CD8-positive, alpha-beta T cell (primary cell): ENCODE measurements at regions of chr12 and their contacts with region 1.

Region 1: DNA sequence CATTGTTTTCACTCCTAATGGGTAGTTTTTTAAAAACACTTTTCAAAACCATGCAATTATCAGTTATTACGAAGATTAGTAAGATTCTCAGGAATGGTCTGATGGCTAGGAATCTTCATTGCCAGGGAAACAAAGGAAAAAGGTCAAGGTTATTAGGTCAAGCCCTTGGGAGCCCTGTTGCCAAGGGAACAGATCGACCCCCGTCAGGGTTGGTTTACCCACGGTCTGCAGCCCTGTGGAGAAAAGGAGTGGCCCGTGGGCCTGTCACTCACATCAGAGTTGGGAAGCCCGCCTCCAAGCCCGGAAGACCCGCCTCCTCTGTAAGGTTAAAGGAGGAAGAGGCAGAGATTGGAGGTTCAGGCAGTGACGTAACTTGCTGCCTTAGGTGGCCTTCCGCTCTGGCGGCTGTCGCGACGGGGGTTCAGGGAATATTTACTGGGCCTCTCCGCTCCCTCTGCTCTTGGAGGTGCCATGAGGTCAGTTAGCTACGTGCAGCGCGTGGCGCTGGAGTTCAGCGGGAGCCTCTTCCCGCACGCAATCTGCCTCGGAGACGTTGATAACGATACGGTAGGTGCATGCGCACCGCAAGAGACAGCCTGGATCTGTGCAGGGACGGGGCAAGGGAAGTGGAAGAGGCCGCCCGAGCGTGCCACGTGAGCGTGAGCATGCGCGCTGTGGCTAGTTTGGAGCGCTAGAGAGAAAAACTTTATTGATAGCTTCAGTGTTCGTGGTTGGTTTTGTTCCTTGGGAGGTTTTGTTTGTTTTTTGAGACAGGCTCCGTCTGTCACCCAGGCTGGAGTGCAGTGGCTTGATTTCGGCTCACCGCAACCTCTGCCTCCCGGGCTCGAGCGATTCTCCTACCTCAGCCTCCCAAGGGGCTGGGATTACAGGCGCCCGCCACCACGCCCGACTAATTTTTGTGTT is at the start of gene ITFG2:
- DNase-seq: peak; percentile 90 to 99 (median 95)
- ATAC-seq: peak; percentile 92
- H3K4me3 ChIP-seq: peak within 1 kb of the TSS; percentile 66 to 80
- H3K4me3 Mint-ChIP-seq: peak within 1 kb of the TSS; percentile 100
- H3K27ac ChIP-seq: peak within 1 kb of the TSS; percentile 83 to 89
- H3K27ac Mint-ChIP-seq: peak within 1 kb of the TSS; percentile 100
- H3K4me1 ChIP-seq: peaks cover 31% of the 10 kb centered on the region
- H3K4me1 Mint-ChIP-seq: peaks cover 38% of the 10 kb centered on the region
- H3K27me3 ChIP-seq: no peaks in the 10 kb centered on the region
- H3K27me3 Mint-ChIP-seq: no peaks in the 10 kb centered on the region
- CTCF ChIP-seq: no peak
- total RNA-seq, gene ITFG2: 72.8 to 73.5 TPM

Region 2: GRCh38 chr12:2682296-2683251 is 130.0 kb before region 1 on chr12:
- CTCF ChIA-PET with region 1: interaction called, 18 read pairs
- POLR2A ChIA-PET with region 1: no interaction called
- intact Hi-C with region 1: loop called (anchors 1 to 2 kb)
- DNase-seq: peak in 6 of 9 experiments; percentile 33 to 72 (median 50)
- ATAC-seq: peak; percentile 79
- H3K4me3 ChIP-seq: no peak overlapping the region
- H3K4me3 Mint-ChIP-seq: no peak overlapping the region
- H3K27ac ChIP-seq: no peak overlapping the region
- H3K27ac Mint-ChIP-seq: peak overlapping the region; percentile 66
- H3K4me1 ChIP-seq: no peaks in the 10 kb centered on the region
- H3K4me1 Mint-ChIP-seq: peaks cover 7% of the 10 kb centered on the region
- H3K27me3 ChIP-seq: no peaks in the 10 kb centered on the region
- H3K27me3 Mint-ChIP-seq: no peaks in the 10 kb centered on the region
- CTCF ChIP-seq: peak; percentile 77

Region 3: DNA sequence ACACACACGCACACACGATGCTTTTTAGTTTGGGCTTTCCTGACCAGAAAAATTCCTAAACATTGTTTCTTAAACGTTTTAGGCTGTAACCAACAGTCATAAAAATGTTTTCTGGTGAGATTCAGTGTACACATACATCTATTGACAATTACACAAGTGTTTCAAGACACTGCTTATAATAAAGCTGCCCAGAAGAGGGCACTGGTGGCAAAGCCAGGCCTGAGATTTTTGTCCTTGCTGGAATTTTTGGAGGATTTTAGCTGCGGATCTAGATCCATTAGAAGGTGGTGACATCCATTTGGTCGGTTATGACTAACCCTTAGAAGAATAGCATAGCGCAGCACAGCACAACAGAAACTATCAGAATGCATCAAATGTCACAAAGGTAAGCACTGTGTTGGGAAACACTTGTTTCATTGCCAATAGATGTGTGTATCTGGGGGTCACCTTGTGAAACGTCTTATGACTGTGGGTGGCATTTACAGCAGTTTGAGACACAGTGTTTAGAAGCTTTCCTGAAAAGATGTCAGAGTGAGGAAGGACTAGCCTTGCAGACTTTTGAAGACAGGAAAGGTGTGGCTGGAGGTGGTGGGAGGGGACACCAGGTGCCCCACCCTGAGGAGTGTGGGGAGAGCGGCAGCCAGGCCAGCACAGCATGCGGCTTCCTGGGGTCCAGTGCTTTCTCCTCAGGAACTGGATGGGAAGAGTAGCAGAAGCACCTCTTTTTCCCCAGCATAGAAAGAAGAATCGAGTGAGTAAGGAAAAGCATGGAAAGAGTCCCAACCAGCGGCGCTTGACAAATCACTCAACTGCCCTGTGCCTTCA is 72.5 kb before region 1 on chr12:
- CTCF ChIA-PET with region 1: no interaction called
- POLR2A ChIA-PET with region 1: no interaction called
- intact Hi-C with region 1: no loop called
- DNase-seq: no peak
- ATAC-seq: no peak
- H3K4me3 ChIP-seq: no peak overlapping the region
- H3K4me3 Mint-ChIP-seq: no peak overlapping the region
- H3K27ac ChIP-seq: no peak overlapping the region
- H3K27ac Mint-ChIP-seq: no peak overlapping the region
- H3K4me1 ChIP-seq: no peaks in the 10 kb centered on the region
- H3K4me1 Mint-ChIP-seq: no peaks in the 10 kb centered on the region
- H3K27me3 ChIP-seq: no peaks in the 10 kb centered on the region
- H3K27me3 Mint-ChIP-seq: peaks cover 3% of the 10 kb centered on the region
- CTCF ChIP-seq: no peak

Region 4: DNA sequence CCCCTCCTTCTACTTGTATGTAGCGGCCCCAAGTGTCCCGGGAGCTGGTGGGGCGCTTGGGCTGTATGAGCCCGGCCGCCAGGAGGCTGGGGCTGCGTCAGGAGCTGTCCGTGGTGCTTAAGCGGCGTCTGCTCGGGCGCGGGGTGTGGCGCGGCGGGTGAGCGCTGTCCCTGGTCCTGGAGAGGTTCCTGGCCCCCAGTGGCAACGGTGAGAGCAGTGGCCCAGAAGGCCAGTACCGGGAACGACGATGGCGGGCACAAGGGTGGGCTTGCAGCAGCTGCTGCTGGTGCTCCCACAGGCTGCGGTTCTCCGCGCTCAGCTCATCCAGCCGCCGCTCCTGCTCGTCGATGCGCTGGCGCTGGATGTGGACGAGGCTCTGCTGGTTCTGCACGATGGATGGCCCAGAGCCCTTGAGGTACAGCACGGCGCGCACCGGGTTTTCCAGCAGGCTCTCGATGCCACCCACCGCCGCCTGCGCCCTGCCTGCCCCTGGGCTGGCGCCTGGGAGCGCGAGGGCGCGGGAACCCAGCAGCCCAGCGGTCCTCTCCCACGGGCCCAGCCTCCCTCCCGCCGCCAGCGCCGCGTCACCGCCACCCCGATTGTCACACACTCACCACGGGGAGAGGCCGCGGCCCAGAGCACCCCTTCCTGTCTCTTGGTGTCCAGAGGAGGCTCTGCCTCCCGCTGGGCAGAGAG is 59.7 kb before region 1 on chr12:
- CTCF ChIA-PET with region 1: no interaction called
- POLR2A ChIA-PET with region 1: no interaction called
- intact Hi-C with region 1: loop called in 1 of 2 experiments (anchors 2 kb)
- DNase-seq: peak; percentile 63 to 87 (median 80)
- ATAC-seq: peak; percentile 100
- H3K4me3 ChIP-seq: no peak overlapping the region
- H3K4me3 Mint-ChIP-seq: no peak overlapping the region
- H3K27ac ChIP-seq: no peak overlapping the region
- H3K27ac Mint-ChIP-seq: no peak overlapping the region
- H3K4me1 ChIP-seq: peaks cover 3% of the 10 kb centered on the region
- H3K4me1 Mint-ChIP-seq: no peaks in the 10 kb centered on the region
- H3K27me3 ChIP-seq: peaks cover 0 to 5% of the 10 kb centered on the region in 2 experiments
- H3K27me3 Mint-ChIP-seq: peaks cover 34% of the 10 kb centered on the region
- CTCF ChIP-seq: no peak

Region 5: DNA sequence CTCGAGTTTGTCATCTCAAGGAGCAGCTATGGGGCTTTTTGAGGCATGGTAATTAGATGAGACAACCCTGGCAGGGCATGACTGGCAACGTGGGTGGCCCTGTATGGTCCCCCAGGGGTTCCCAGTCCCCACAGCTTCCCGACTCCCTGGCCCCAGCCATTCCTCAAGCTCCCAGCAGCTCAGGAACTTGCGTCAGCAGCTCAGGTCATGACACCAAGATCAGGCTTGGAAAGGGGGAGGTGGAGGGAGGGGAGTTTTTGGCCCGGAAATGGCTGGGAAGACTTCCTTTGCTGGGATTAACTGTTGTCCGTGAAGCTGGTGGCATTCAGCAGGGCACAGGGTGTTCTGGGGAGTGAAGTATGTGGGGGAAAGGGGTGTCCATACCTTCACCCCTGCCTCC is 32.7 kb after region 1 on chr12:
- CTCF ChIA-PET with region 1: no interaction called
- POLR2A ChIA-PET with region 1: no interaction called
- intact Hi-C with region 1: no loop called
- DNase-seq: no peak
- ATAC-seq: no peak
- H3K4me3 ChIP-seq: no peak overlapping the region
- H3K4me3 Mint-ChIP-seq: no peak overlapping the region
- H3K27ac ChIP-seq: no peak overlapping the region
- H3K27ac Mint-ChIP-seq: no peak overlapping the region
- H3K4me1 ChIP-seq: no peaks in the 10 kb centered on the region
- H3K4me1 Mint-ChIP-seq: peaks cover 4% of the 10 kb centered on the region
- H3K27me3 ChIP-seq: no peaks in the 10 kb centered on the region
- H3K27me3 Mint-ChIP-seq: no peaks in the 10 kb centered on the region
- CTCF ChIP-seq: no peak

Region 6: DNA sequence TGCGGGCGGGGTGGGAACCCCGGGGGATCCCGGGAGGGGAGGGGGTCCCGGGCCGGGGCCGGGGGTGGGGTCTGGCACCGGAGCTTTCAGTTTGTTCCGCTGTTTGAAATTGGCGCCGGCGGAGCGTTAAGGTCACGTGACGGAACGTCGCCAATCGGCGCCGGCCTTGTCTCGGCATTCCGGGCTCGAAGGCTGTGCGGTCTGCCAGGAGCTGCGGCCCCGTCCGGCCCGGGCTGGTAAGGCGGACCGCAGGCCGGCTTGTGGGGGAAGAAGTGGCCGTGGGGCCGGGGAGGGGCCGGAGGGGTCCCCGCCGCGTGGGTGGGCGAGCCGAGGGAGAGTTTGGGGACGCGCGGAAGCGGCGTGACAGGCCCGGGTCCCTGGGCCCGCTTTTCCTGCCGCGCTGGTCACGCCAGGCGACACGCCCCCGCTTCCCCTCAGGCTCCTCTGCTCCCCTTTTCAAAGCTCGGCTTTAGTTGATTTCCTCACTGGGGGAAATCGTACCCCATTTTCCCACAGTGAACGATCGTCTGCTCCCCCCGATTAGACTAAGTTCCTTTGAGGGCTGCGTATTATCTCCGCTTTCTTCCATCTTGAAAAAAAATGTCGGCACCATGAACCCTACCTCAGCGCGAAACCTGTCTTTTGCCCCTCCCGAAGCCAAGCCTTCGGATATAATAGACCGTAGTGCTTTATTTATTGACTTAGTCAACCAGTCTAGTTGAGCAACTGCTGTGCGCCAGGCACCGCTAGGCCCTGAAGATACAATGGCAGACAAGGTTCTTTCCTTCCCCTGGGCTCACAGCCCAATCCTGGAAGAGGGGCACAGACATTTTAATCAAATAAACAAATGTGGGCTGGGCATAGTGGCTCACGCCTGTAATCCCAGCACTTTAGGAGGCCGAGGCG is 64.7 kb after region 1 on chr12 and contains the starts of genes FOXM1 and RHNO1:
- CTCF ChIA-PET with region 1: interaction called, 3 read pairs
- POLR2A ChIA-PET with region 1: interaction called, 13 read pairs
- intact Hi-C with region 1: loop called (anchors 1 kb)
- DNase-seq: peak; percentile 73 to 91 (median 85)
- ATAC-seq: peak; percentile 78
- H3K4me3 ChIP-seq: peak within 1 kb of the TSS; percentile 83 to 95
- H3K4me3 Mint-ChIP-seq: peak within 1 kb of the TSS; percentile 99
- H3K27ac ChIP-seq: peak within 1 kb of the TSS; percentile 90 to 91
- H3K27ac Mint-ChIP-seq: peak within 1 kb of the TSS; percentile 100
- H3K4me1 ChIP-seq: peaks cover 22% of the 10 kb centered on the region
- H3K4me1 Mint-ChIP-seq: peaks cover 37% of the 10 kb centered on the region
- H3K27me3 ChIP-seq: no peaks in the 10 kb centered on the region
- H3K27me3 Mint-ChIP-seq: no peaks in the 10 kb centered on the region
- CTCF ChIP-seq: no peak
- total RNA-seq, gene FOXM1: 0.83 to 0.95 TPM
- total RNA-seq, gene RHNO1: 22.4 to 24.4 TPM

Region 7: DNA sequence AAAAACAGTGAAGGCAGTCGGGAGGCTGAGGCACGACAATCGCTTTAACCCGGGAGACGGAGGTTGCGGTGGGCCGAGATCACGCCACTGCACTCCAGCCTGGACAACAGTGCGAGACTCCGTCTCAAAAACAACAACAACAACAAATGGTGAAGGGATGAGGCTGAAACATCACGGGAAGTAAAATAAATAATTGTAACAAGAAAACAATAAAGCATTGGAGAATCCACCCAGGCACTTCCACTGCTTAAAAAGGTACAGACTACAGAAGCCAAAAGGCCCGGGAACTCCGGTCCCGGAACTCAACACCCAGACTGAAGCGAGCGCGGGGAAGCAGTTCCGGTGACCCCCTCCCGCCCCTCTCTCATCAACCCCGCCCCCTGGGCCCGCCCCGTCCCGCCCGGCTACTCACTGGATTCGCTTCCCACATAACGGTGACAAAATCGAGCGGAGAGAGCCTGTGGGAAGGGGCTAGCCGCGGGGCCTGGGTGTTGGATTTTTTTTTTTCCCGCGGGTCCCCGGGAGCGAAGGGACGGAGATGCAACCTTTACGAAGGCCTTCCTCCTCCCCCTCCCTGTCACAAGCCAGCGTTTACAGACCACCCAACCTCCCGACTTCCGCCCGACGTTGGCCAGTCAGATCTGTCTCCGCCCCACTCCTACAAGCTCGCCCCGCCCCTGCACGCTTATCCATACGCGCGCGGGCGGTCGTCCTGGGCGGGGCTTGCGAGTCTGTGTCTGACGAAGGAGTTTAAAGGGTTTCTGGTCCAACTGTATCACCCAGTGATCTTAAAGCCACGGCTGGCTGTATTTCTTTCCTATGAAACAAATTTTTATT is 1060.5 kb after region 1 on chr12 and contains the start of gene PARP11:
- CTCF ChIA-PET with region 1: no interaction called
- POLR2A ChIA-PET with region 1: no interaction called
- intact Hi-C with region 1: loop called in 1 of 2 experiments (anchors 5 kb)
- DNase-seq: peak; percentile 95 to 99 (median 98)
- ATAC-seq: peak; percentile 96
- H3K4me3 ChIP-seq: peak within 1 kb of the TSS; percentile 64 to 80
- H3K4me3 Mint-ChIP-seq: peak within 1 kb of the TSS; percentile 97
- H3K27ac ChIP-seq: peak within 1 kb of the TSS; percentile 88 to 97
- H3K27ac Mint-ChIP-seq: peak within 1 kb of the TSS; percentile 99
- H3K4me1 ChIP-seq: peaks cover 45% of the 10 kb centered on the region
- H3K4me1 Mint-ChIP-seq: peaks cover 47% of the 10 kb centered on the region
- H3K27me3 ChIP-seq: no peaks in the 10 kb centered on the region
- H3K27me3 Mint-ChIP-seq: no peaks in the 10 kb centered on the region
- CTCF ChIP-seq: no peak
- total RNA-seq, gene PARP11: 11.5 to 11.8 TPM